Activated T-helper 1 cell treated with anti-CD3 and anti-CD28 coated beads, Interleukin-12 subunit alpha, Interleukin-12 subunit beta, Interleukin-2, Interleukin-4 antibody, amounts not matched to agents 30 ng/mL and 10 ng/mL and 1 ng/mL, durations not matched to agents 14 hours and 24 hours and 36 hours (primary cell): ENCODE measurements at regions of chr17 and their contacts with region 1.

Region 1: DNA sequence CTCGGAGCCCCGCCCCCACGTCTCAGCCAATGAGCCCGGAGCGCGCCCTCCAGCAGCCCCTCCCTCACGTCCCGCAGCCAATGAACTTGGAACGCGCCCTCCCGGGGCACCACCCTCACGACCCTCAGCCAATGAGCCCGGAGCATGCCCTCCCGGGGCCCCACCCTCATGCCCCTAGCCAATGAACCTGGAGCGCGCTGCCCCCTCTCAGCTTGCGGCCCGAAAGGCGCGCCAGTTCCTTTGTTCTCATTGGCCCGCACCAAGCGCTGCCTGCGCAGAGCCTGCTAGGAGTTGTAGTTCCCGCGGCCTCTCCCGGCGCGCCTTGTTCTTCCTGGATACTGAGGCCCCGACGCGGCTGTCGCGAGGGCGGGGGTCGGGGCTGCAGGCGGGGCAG is at the start of gene LRRC45:
- DNase-seq: peak; percentile 100
- H3K4me3 Mint-ChIP-seq: peak within 1 kb of the TSS; percentile 90
- H3K27ac Mint-ChIP-seq: peak within 1 kb of the TSS; percentile 68
- H3K4me1 Mint-ChIP-seq: peaks cover 15% of the 10 kb centered on the region
- H3K27me3 Mint-ChIP-seq: no peaks in the 10 kb centered on the region
- total RNA-seq, gene LRRC45: 37.6 and 37.8 TPM in 2 replicates

Region 2: GRCh38 chr17:81453712-81454111 is 569.3 kb before region 1 on chr17:
- intact Hi-C with region 1: no loop called
- DNase-seq: peak; percentile 7
- H3K4me3 Mint-ChIP-seq: no peak overlapping the region
- H3K27ac Mint-ChIP-seq: no peak overlapping the region
- H3K4me1 Mint-ChIP-seq: no peaks in the 10 kb centered on the region
- H3K27me3 Mint-ChIP-seq: peaks cover 2% of the 10 kb centered on the region

Region 3: DNA sequence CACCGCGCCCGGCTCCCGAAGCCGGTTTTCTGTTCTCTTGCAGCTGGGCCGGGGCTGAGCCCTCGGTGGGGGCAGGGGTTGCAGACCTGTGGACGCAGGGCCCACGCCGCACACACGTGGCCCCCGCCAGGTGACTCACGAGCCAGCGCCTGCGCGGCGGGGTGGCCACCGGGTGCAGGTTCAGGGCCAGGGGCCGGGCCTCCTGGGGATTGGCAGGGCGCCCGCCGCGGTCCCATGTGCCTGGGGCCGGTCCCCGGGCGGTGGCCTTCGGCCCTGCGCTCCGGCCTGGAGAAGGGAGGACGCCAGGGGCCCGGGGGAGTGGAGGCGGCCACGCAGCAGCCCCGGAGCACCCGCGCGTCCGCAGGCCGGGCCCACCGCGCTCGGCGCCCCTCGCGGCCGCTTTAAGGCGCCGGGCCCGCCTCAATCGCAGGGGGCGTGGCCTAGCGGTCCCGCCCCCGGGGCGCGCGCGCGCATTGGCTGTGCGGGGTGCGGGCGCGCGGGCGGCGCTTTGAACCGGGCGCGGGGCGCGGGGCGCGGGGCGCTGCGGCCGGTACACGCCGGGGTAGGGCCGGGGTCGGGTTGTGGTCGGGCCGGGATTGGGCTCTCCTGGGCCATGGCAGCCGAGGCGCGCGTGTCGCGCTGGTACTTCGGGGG is 311.0 kb before region 1 on chr17 and contains the start of gene SLC25A10:
- intact Hi-C with region 1: loop called (anchors 5 kb)
- DNase-seq: peak; percentile 81
- H3K4me3 Mint-ChIP-seq: peak within 1 kb of the TSS; percentile 90
- H3K27ac Mint-ChIP-seq: peak within 1 kb of the TSS; percentile 79
- H3K4me1 Mint-ChIP-seq: peaks cover 13% of the 10 kb centered on the region
- H3K27me3 Mint-ChIP-seq: no peaks in the 10 kb centered on the region
- total RNA-seq, gene SLC25A10: 45.7 and 49.6 TPM in 2 replicates

Region 4: GRCh38 chr17:81959362-81960129 is 63.4 kb before region 1 on chr17:
- intact Hi-C with region 1: loop called (anchors 1 kb)
- DNase-seq: peak; percentile 77
- H3K4me3 Mint-ChIP-seq: peak overlapping the region; percentile 61
- H3K27ac Mint-ChIP-seq: peak overlapping the region; percentile 75
- H3K4me1 Mint-ChIP-seq: no peaks in the 10 kb centered on the region
- H3K27me3 Mint-ChIP-seq: peaks cover 41% of the 10 kb centered on the region

Region 5: DNA sequence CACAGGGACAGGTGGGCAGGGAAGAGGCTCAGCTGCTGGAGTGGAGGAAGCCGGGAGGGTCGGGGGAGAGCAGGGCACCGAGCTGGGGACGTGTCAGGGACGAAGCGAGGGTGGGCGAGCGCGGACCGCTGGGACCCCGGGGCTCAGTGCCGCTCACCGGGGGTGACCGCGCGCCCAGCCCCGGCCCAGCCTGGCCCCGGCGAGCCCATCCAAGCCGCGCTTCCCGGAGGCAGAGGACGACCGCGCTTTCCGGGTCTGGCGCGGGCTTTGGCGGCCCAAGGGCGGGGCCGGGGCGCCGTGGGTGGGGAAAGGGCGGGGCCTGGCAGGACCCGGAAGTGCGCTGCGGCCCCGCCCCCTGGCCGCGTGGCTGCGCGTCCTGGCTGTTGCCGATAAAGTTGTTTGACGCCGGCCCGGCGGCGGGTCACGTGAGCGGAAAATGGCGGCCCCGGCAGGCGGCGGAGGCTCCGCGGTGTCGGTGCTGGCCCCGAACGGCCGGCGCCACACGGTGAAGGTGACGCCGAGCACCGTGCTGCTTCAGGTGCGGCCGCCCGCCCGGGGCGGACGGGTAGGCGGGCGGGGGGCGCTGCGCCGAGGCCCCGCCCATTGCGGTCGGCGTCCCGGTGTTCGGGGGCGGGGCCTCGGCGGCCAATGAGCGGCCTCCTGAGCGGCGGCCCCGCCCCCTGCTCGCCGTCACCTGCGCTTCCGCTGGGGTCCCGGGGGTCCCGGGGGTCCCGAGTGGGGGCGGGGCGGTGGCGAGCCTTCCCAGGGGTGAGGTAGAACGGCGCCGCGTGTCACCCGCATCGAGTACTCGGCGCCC is 45.6 kb before region 1 on chr17 and contains the start of gene ASPSCR1:
- intact Hi-C with region 1: loop called (anchors 1 kb)
- DNase-seq: peak; percentile 86
- H3K4me3 Mint-ChIP-seq: peak within 1 kb of the TSS; percentile 97
- H3K27ac Mint-ChIP-seq: peak within 1 kb of the TSS; percentile 99
- H3K4me1 Mint-ChIP-seq: peaks cover 32% of the 10 kb centered on the region
- H3K27me3 Mint-ChIP-seq: peaks cover 9% of the 10 kb centered on the region
- total RNA-seq, gene ASPSCR1: 32.2 and 33.8 TPM in 2 replicates

Region 6: GRCh38 chr17:82065638-82066303 is 42.8 kb after region 1 on chr17 and contains the start of gene DUS1L:
- intact Hi-C with region 1: loop called (anchors 5 kb)
- DNase-seq: peak; percentile 71
- H3K4me3 Mint-ChIP-seq: peak within 1 kb of the TSS; percentile 86
- H3K27ac Mint-ChIP-seq: peak within 1 kb of the TSS; percentile 83
- H3K4me1 Mint-ChIP-seq: no peaks in the 10 kb centered on the region
- H3K27me3 Mint-ChIP-seq: no peaks in the 10 kb centered on the region
- total RNA-seq, gene DUS1L: 231 and 235 TPM in 2 replicates

Region 7: DNA sequence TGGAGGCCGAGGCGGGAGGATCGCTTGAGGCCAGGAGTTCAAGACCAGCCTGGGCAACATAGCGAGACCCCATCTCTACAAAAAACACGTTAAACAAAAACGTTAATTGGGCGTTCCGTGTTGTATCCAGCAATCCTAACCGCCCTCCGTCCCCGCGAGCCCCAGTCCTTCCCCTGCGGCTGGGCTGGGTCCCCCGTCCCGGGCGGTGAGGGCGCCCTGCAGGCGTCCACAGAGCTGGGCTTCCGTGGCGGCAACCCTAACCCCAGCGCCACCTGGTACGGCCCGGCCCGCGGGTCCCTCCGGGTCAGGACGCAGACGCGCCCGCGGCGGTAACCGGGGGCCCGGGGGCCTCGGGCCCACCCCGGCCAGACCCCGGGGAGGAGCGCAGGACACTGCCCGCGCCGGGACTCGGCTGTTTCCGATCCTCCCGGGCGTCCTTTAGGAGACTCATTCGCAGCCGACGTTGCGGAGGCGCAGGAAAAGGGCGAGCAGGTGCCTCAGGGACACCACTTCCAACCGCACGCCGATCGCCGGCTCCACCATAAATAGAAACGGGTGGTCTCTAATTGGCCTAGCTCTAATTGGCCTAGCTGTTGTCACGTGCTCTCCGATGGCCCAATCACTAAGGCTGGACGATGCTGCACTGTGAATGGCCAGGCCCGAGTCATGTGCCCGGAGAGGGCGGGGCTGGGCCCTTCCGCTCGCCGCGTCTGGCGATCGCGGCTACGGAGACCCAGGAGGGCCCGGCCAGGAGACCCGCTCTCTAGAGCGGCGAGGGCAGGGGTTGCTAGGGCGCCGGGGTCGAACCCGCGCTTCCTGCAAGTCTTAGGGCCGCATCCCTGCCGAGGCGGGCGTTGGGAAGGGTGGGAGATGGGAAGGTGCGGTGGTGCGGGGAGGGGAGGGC is 269.5 kb after region 1 on chr17:
- intact Hi-C with region 1: loop called (anchors 10 kb)
- DNase-seq: peak; percentile 92
- H3K4me3 Mint-ChIP-seq: peak overlapping the region; percentile 90
- H3K27ac Mint-ChIP-seq: peak overlapping the region; percentile 93
- H3K4me1 Mint-ChIP-seq: peaks cover 48% of the 10 kb centered on the region
- H3K27me3 Mint-ChIP-seq: peaks cover 2% of the 10 kb centered on the region